CD8-positive, alpha-beta memory T cell (primary cell): ENCODE measurements at regions of chr20 and their contacts with region 1.

Region 1: GRCh38 chr20:37534401-37535157 is 6.9 kb upstream of the BLCAP start:
- DNase-seq: peak in 3 of 5 donors; percentile 37 to 60 (median 58)
- H3K4me3 ChIP-seq: no peak overlapping the region
- H3K4me3 Mint-ChIP-seq: peak overlapping the region in 1 of 7 donors; percentile 8
- H3K27ac ChIP-seq: no peak overlapping the region
- H3K27ac Mint-ChIP-seq: peak overlapping the region in 1 of 8 donors; percentile 39
- H3K4me1 ChIP-seq: no peaks in the 10 kb centered on the region
- H3K4me1 Mint-ChIP-seq: peaks cover 0 to 3% (median 0%) of the 10 kb centered on the region in 3 donors
- H3K27me3 ChIP-seq: no peaks in the 10 kb centered on the region
- H3K27me3 Mint-ChIP-seq: peaks cover 9 to 14% of the 10 kb centered on the region in 2 donors

Region 2: DNA sequence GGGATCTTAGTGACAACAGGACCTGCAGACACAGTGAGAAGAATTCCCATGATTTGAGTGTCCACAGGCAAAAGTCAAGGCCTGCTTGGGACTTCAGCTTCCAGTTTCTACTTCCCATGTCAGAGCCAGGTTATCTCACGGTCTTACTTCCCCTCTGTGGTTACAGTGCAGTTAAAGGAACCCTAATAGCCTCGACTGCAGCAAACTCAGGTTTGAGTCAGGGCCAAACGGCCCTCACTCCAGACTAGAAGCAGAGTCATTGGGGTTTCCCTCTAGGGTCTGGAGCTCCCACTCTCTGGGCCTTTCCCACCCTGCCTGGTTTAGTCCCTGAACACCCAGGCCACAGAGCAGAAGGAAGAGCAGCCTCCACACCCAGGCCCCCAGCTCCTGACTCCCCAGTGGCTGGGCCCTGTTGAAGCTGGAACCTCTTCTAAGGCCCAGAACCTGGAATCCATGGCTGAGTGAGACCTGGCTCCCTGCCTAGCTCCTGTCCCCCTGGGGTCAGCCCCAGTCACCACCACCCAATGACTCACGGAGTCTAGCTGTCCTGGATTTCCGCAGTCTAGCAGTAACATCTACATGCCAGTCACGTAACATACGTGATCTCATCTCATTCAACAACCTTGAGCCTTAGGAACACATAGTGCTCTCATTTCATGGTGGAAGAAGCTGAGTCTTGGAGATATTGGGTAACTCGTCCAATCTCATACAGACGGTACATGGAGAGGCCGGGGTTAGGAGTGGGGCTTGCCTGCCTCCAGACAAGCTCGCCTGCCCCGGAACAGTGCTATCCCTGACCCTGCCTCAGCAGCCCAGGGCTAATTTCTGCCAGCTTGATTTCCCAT is 263.8 kb before region 1 on chr20:
- CTCF ChIA-PET with region 1: interaction called, 21 read pairs
- POLR2A ChIA-PET with region 1: no interaction called
- DNase-seq: no peak
- H3K4me3 ChIP-seq: no peak overlapping the region
- H3K4me3 Mint-ChIP-seq: no peak overlapping the region
- H3K27ac ChIP-seq: no peak overlapping the region
- H3K27ac Mint-ChIP-seq: peak overlapping the region in 1 of 8 donors; percentile 42
- H3K4me1 ChIP-seq: no peaks in the 10 kb centered on the region
- H3K4me1 Mint-ChIP-seq: no peaks in the 10 kb centered on the region
- H3K27me3 ChIP-seq: no peaks in the 10 kb centered on the region
- H3K27me3 Mint-ChIP-seq: peaks cover 5 to 8% of the 10 kb centered on the region in 2 donors

Region 3: GRCh38 chr20:37490663-37491350 is 43.8 kb before region 1 on chr20:
- CTCF ChIA-PET with region 1: no interaction called
- POLR2A ChIA-PET with region 1: no interaction called
- DNase-seq: no peak
- H3K4me3 ChIP-seq: no peak overlapping the region
- H3K4me3 Mint-ChIP-seq: no peak overlapping the region
- H3K27ac ChIP-seq: no peak overlapping the region
- H3K27ac Mint-ChIP-seq: no peak overlapping the region
- H3K4me1 ChIP-seq: no peaks in the 10 kb centered on the region
- H3K4me1 Mint-ChIP-seq: peaks cover 0 to 3% (median 0%) of the 10 kb centered on the region in 3 donors
- H3K27me3 ChIP-seq: no peaks in the 10 kb centered on the region
- H3K27me3 Mint-ChIP-seq: peaks cover 0 to 3% of the 10 kb centered on the region in 2 donors